Mucosa of descending colon (tissue), 3 donors: ENCODE measurements at regions of chr3 and their contacts with region 1.

Region 1: GRCh38 chr3:148943506-148944205 is 47.7 kb upstream of the GYG1 start:
- DNase-seq: peak in 1 of 3 donors; percentile 42
- ATAC-seq: peak; percentile 72
- H3K4me3 ChIP-seq: no peak overlapping the region
- H3K4me1 ChIP-seq: no peaks in the 10 kb centered on the region
- CTCF ChIP-seq: peak; percentile 39

Region 2: GRCh38 chr3:148379763-148380382 is 563.8 kb before region 1 on chr3:
- intact Hi-C with region 1: loop called in 1 of 2 experiments (anchors 10 kb)
- DNase-seq: peak in 1 of 3 donors; percentile 14
- ATAC-seq: peak; percentile 71
- H3K4me3 ChIP-seq: no peak overlapping the region
- H3K4me1 ChIP-seq: no peaks in the 10 kb centered on the region
- CTCF ChIP-seq: no peak

Region 3: DNA sequence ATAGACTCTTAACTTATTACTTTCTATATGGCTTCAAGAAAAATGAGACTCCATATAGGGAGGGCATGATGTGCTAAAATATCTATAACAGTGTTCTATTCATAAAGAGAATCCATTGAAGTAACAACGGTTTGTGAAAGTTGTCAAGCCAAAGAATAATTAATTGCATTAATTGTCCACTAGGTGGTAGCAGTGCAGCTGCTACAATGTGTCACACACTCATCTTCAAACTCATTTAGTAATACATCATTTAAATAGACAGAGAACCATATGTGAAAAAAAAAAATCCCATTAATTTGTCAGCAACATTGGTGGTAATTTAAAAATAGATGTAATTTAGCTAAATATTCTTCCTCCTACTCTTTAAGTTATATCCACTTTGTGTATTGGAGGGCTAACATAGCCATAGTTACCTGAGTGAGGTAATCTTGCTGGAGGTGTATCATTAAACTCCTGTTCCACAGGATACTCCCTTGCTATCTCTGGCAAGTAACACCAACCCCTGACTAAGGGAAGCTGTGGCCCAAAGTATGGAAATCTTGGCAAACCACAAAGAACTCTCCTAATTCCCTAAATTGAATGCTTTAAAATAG is 82.3 kb before region 1 on chr3:
- intact Hi-C with region 1: loop called (anchors 5 kb)
- DNase-seq: no peak
- ATAC-seq: peak; percentile 59
- H3K4me3 ChIP-seq: no peak overlapping the region
- H3K4me1 ChIP-seq: no peaks in the 10 kb centered on the region
- CTCF ChIP-seq: peak; percentile 68

Region 4: GRCh38 chr3:149023951-149024350 is 80.3 kb after region 1 on chr3:
- intact Hi-C with region 1: no loop called
- DNase-seq: no peak
- ATAC-seq: no peak
- H3K4me3 ChIP-seq: no peak overlapping the region
- H3K4me1 ChIP-seq: no peaks in the 10 kb centered on the region
- CTCF ChIP-seq: no peak